Right cardiac atrium (tissue), 5 donors: ENCODE measurements at regions of chr22 and their contacts with region 1.

Region 1: GRCh38 chr22:26321469-26321913 is 107.6 kb upstream of the ASPHD2 start:
- DNase-seq: peak; percentile 36 to 79 (median 66)
- ATAC-seq: peak; percentile 85 to 91
- H3K4me3 ChIP-seq: no peak overlapping the region
- H3K27ac ChIP-seq: peak overlapping the region; percentile 25
- H3K4me1 ChIP-seq: no peaks in the 10 kb centered on the region
- H3K27me3 ChIP-seq: no peaks in the 10 kb centered on the region

Region 2: GRCh38 chr22:26079009-26079738 is 242.3 kb before region 1 on chr22:
- intact Hi-C with region 1: loop called in 2 of 4 experiments (anchors 10 kb)
- DNase-seq: no peak
- ATAC-seq: no peak
- H3K4me3 ChIP-seq: no peak overlapping the region
- H3K27ac ChIP-seq: no peak overlapping the region
- H3K4me1 ChIP-seq: no peaks in the 10 kb centered on the region
- H3K27me3 ChIP-seq: no peaks in the 10 kb centered on the region

Region 3: GRCh38 chr22:26086359-26086758 is 235.1 kb before region 1 on chr22:
- intact Hi-C with region 1: loop called in 1 of 4 experiments (anchors 10 kb)
- DNase-seq: no peak
- ATAC-seq: no peak
- H3K4me3 ChIP-seq: no peak overlapping the region
- H3K27ac ChIP-seq: no peak overlapping the region
- H3K4me1 ChIP-seq: no peaks in the 10 kb centered on the region
- H3K27me3 ChIP-seq: no peaks in the 10 kb centered on the region

Region 4: DNA sequence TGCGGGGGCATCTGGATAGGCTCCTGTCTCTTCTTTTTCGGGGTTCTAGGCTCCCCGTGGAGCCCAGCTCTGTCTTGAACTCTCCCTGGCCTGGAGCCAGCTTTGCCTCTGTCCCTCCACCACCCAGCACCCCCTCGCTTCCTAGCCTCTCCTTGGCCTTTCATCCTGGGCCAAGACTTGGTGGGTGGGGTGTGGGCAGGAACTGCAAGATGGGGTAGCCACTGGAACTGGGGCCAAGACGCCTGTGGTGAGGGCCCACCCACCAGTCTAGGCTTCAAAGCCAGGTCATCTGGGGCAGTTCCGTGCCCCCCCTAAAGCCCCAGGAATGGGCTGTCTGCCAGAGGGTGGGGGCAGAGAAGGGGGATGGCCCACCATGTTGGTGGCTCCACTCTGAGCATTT is 298.0 kb after region 1 on chr22:
- intact Hi-C with region 1: no loop called
- DNase-seq: peak; percentile 73 to 81 (median 76)
- ATAC-seq: peak; percentile 66 to 91
- H3K4me3 ChIP-seq: no peak overlapping the region
- H3K27ac ChIP-seq: no peak overlapping the region
- H3K4me1 ChIP-seq: no peaks in the 10 kb centered on the region
- H3K27me3 ChIP-seq: no peaks in the 10 kb centered on the region